ENCODE measurements at regions of chr22 and their contacts with region 1.

Region 1: GRCh38 chr22:21629262-21630149 is at the start of gene YDJC:
- DNase-seq: peak; percentile 96
- ATAC-seq: peak; percentile 87
- H3K4me3 Mint-ChIP-seq: peak within 1 kb of the TSS; percentile 86
- H3K27ac Mint-ChIP-seq: peak within 1 kb of the TSS; percentile 95
- H3K4me1 Mint-ChIP-seq: peaks cover 47% of the 10 kb centered on the region
- H3K27me3 Mint-ChIP-seq: no peaks in the 10 kb centered on the region
- CTCF ChIP-seq: peak; percentile 36
- total RNA-seq, gene YDJC: 60.1 to 64.9 TPM

Region 2: GRCh38 chr22:21447694-21448402 is 181.7 kb before region 1 on chr22:
- CTCF ChIA-PET with region 1: no interaction called
- POLR2A ChIA-PET with region 1: no interaction called
- intact Hi-C with region 1: no loop called
- DNase-seq: peak; percentile 22
- ATAC-seq: peak; percentile 47
- H3K4me3 Mint-ChIP-seq: no peak overlapping the region
- H3K27ac Mint-ChIP-seq: no peak overlapping the region
- H3K4me1 Mint-ChIP-seq: no peaks in the 10 kb centered on the region
- H3K27me3 Mint-ChIP-seq: no peaks in the 10 kb centered on the region
- CTCF ChIP-seq: peak; percentile 17

Region 3: GRCh38 chr22:21567456-21568346 is 61.8 kb before region 1 on chr22 and contains the start of gene UBE2L3:
- CTCF ChIA-PET with region 1: interaction called, 11 read pairs
- POLR2A ChIA-PET with region 1: interaction called, 13 read pairs
- intact Hi-C with region 1: no loop called
- DNase-seq: peak; percentile 89
- ATAC-seq: peak; percentile 83
- H3K4me3 Mint-ChIP-seq: peak within 1 kb of the TSS; percentile 91
- H3K27ac Mint-ChIP-seq: peak within 1 kb of the TSS; percentile 95
- H3K4me1 Mint-ChIP-seq: peaks cover 41% of the 10 kb centered on the region
- H3K27me3 Mint-ChIP-seq: no peaks in the 10 kb centered on the region
- CTCF ChIP-seq: no peak
- total RNA-seq, gene UBE2L3: 50.3 to 54.9 TPM

Region 4: GRCh38 chr22:21615731-21616130 is 13.8 kb before region 1 on chr22:
- CTCF ChIA-PET with region 1: interaction called, 13 read pairs
- POLR2A ChIA-PET with region 1: interaction called, 17 read pairs
- intact Hi-C with region 1: no loop called
- DNase-seq: no peak
- ATAC-seq: no peak
- H3K4me3 Mint-ChIP-seq: no peak overlapping the region
- H3K27ac Mint-ChIP-seq: peak overlapping the region; percentile 3
- H3K4me1 Mint-ChIP-seq: peaks cover 11% of the 10 kb centered on the region
- H3K27me3 Mint-ChIP-seq: no peaks in the 10 kb centered on the region
- CTCF ChIP-seq: no peak

Region 5: GRCh38 chr22:21641789-21642583 is 12.5 kb after region 1 on chr22 and contains the start of gene SDF2L1:
- CTCF ChIA-PET with region 1: interaction called, 78 read pairs
- POLR2A ChIA-PET with region 1: interaction called, 98 read pairs
- intact Hi-C with region 1: no loop called
- DNase-seq: peak; percentile 99
- ATAC-seq: peak; percentile 97
- H3K4me3 Mint-ChIP-seq: peak within 1 kb of the TSS; percentile 89
- H3K27ac Mint-ChIP-seq: peak within 1 kb of the TSS; percentile 89
- H3K4me1 Mint-ChIP-seq: peaks cover 26% of the 10 kb centered on the region
- H3K27me3 Mint-ChIP-seq: no peaks in the 10 kb centered on the region
- CTCF ChIP-seq: no peak
- total RNA-seq, gene SDF2L1: 38.6 to 41.3 TPM

Region 6: GRCh38 chr22:21652010-21652546 is 22.6 kb after region 1 on chr22:
- CTCF ChIA-PET with region 1: interaction called, 37 read pairs
- POLR2A ChIA-PET with region 1: interaction called, 21 read pairs
- intact Hi-C with region 1: no loop called
- DNase-seq: peak; percentile 95
- ATAC-seq: peak; percentile 97
- H3K4me3 Mint-ChIP-seq: peak overlapping the region; percentile 89
- H3K27ac Mint-ChIP-seq: peak overlapping the region; percentile 83
- H3K4me1 Mint-ChIP-seq: peaks cover 22% of the 10 kb centered on the region
- H3K27me3 Mint-ChIP-seq: no peaks in the 10 kb centered on the region
- CTCF ChIP-seq: no peak